Heart left ventricle (tissue), 16 donors: ENCODE measurements at regions of chr13 and their contacts with region 1.

Region 1: DNA sequence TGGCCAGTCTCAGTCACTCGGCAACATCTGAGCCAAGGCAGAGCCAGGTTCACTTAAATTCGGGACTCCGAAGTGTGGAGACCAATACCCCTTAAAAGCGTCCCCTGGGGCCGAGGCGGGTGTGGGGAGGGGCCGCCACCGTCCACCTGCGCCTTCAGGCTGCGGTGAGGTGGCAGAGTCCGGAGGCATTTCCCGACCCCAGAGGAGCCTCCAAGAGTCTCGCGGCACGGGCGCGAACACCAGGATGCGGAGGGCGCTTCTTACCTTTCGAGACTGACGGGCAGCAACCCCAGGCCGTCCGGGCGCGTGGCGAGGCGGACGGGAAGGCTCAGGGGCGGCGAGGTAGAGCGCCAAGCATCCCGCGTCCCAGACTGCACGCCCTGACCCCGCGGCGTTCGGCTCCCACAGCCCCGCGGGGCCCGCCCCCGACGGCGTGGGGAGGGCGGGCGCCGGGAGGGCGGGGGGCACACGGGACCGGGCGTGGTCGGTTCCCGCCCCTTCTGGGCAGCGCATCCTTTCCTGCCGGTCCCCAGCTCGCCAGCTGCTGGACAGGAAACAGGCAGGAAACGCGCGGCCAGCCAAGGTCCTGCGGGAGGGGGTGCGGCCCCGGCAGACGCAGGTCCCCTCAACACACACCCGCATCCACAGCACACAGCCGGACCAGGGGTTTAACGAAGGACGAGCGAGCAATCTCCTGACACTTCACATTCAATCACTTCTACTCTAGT is at the start of gene THSD1:
- DNase-seq: peak; percentile 84 to 89 (median 86)
- ATAC-seq: peak; percentile 76 to 97 (median 94)
- H3K4me3 ChIP-seq: peak within 1 kb of the TSS; percentile 45 to 88 (median 72)
- H3K27ac ChIP-seq: peak within 1 kb of the TSS; percentile 35 to 91 (median 76)
- H3K4me1 ChIP-seq: peaks cover 0 to 19% (median 11%) of the 10 kb centered on the region in 12 donors
- H3K27me3 ChIP-seq: peaks cover 0 to 13% (median 0%) of the 10 kb centered on the region in 9 donors
- CTCF ChIP-seq: no peak
- POLR2A ChIP-seq: peak in 1 of 2 donors; percentile 59
- total RNA-seq, gene THSD1: 5.4 to 10.1 (median 6.4) TPM

Region 2: GRCh38 chr13:52387721-52388120 is 18.2 kb before region 1 on chr13:
- intact Hi-C with region 1: loop called in 1 of 10 experiments (anchors 1 kb)
- DNase-seq: no peak
- ATAC-seq: no peak
- H3K4me3 ChIP-seq: no peak overlapping the region
- H3K27ac ChIP-seq: no peak overlapping the region
- H3K4me1 ChIP-seq: peaks cover 0 to 18% (median 5%) of the 10 kb centered on the region in 12 donors
- H3K27me3 ChIP-seq: no peaks in the 10 kb centered on the region
- CTCF ChIP-seq: no peak
- POLR2A ChIP-seq: no peak

Region 3: DNA sequence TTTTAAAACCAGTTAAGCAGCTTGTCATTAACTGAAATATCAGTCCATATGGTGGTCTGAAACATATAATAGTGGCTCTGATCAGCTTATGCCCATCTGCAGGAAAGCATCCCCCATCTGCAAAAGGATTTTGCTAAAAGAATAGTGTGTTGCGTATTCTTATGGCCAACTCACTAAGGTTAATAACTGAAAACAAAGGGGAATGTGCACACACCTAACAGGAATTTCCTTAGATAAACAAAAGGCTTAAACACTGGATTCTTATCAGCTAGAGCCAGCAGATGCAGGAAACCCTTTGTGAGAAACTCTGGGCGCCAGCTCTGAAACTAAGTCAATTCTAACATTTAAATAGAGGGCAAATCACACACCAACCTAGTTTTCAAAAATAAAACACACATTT is 22.4 kb after region 1 on chr13:
- intact Hi-C with region 1: loop called in 1 of 10 experiments (anchors 2 kb)
- DNase-seq: peak in 1 of 5 donors; percentile 36
- ATAC-seq: peak in 3 of 4 donors; percentile 57 to 92 (median 66)
- H3K4me3 ChIP-seq: no peak overlapping the region
- H3K27ac ChIP-seq: peak overlapping the region in 9 of 12 donors; percentile 25 to 70 (median 38)
- H3K4me1 ChIP-seq: peaks cover 0 to 21% (median 14%) of the 10 kb centered on the region in 12 donors
- H3K27me3 ChIP-seq: no peaks in the 10 kb centered on the region
- CTCF ChIP-seq: no peak
- POLR2A ChIP-seq: no peak

Region 4: GRCh38 chr13:53010374-53011105 is 604.6 kb after region 1 on chr13:
- intact Hi-C with region 1: no loop called
- DNase-seq: no peak
- ATAC-seq: peak in 1 of 4 donors; percentile 64
- H3K4me3 ChIP-seq: no peak overlapping the region
- H3K27ac ChIP-seq: no peak overlapping the region
- H3K4me1 ChIP-seq: peaks cover 0 to 3% (median 0%) of the 10 kb centered on the region in 12 donors
- H3K27me3 ChIP-seq: no peaks in the 10 kb centered on the region
- CTCF ChIP-seq: no peak
- POLR2A ChIP-seq: no peak